ENCODE measurements at regions of chr9 and their contacts with region 1.

Region 1: GRCh38 chr9:136807281-136808074 is at the start of gene RABL6:
- DNase-seq: peak; percentile 76
- H3K4me3 Mint-ChIP-seq: peak within 1 kb of the TSS; percentile 82
- H3K27ac Mint-ChIP-seq: peak within 1 kb of the TSS; percentile 88
- H3K4me1 Mint-ChIP-seq: peaks cover 32% of the 10 kb centered on the region
- H3K27me3 Mint-ChIP-seq: no peaks in the 10 kb centered on the region
- total RNA-seq, gene RABL6: 74.9 to 82.7 TPM

Region 2: GRCh38 chr9:136160381-136160841 is 647.1 kb before region 1 on chr9:
- CTCF ChIA-PET with region 1: no interaction called
- intact Hi-C with region 1: no loop called
- DNase-seq: no peak
- H3K4me3 Mint-ChIP-seq: no peak overlapping the region
- H3K27ac Mint-ChIP-seq: no peak overlapping the region
- H3K4me1 Mint-ChIP-seq: no peaks in the 10 kb centered on the region
- H3K27me3 Mint-ChIP-seq: peaks cover 6% of the 10 kb centered on the region

Region 3: GRCh38 chr9:136849038-136849959 is 41.8 kb after region 1 on chr9 and contains the start of gene PHPT1:
- CTCF ChIA-PET with region 1: no interaction called
- intact Hi-C with region 1: loop called (anchors 2 kb)
- DNase-seq: peak; percentile 99
- H3K4me3 Mint-ChIP-seq: peak within 1 kb of the TSS; percentile 93
- H3K27ac Mint-ChIP-seq: peak within 1 kb of the TSS; percentile 95
- H3K4me1 Mint-ChIP-seq: peaks cover 14% of the 10 kb centered on the region
- H3K27me3 Mint-ChIP-seq: peaks cover 18% of the 10 kb centered on the region
- total RNA-seq, gene PHPT1: 110 to 116 TPM

Region 4: DNA sequence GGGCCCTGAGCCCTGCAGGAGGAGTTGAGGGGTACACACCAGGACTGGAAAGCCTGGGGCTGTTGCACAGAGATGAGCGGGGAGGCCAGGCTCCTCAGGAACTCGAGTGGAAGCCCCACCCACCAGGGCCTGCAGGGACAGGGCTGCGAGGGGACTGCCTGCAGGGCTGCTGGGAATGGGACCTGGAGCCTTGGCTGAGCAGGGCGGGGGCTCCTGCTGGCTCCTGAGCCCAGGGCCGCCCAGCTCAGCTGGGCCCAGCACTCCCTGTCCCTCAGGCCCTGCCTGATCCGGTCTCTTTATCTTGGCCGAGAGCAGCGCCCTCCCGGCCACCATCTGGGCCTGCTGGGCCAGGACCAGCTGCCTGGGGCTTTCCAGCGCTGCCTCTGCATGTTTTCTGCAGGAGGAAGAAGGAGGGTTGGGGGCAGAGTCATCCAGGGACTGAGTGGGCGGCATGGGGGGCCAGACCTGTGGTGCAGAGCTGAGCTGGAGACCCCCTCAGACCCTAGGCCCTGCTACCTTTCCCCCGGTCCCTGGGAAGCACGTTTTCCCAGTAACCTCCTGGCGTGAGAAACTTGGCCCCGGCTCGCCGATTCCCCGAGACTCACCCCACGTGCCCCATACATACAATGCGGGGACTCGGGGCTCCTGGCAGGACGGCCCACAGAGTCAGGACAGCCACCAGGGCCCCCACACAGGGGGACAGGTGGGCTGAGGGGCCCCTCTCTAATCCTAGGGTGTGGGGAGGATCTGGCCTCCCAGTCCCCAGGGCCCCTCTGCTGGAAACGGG is 154.0 kb after region 1 on chr9:
- CTCF ChIA-PET with region 1: no interaction called
- intact Hi-C with region 1: no loop called
- DNase-seq: no peak
- H3K4me3 Mint-ChIP-seq: no peak overlapping the region
- H3K27ac Mint-ChIP-seq: no peak overlapping the region
- H3K4me1 Mint-ChIP-seq: peaks cover 12% of the 10 kb centered on the region
- H3K27me3 Mint-ChIP-seq: no peaks in the 10 kb centered on the region

Region 5: GRCh38 chr9:136991993-136992818 is 184.7 kb after region 1 on chr9 and contains the start of gene PAXX:
- CTCF ChIA-PET with region 1: no interaction called
- intact Hi-C with region 1: loop called (anchors 1 kb)
- DNase-seq: peak; percentile 95
- H3K4me3 Mint-ChIP-seq: peak within 1 kb of the TSS; percentile 83
- H3K27ac Mint-ChIP-seq: peak within 1 kb of the TSS; percentile 81
- H3K4me1 Mint-ChIP-seq: peaks cover 16% of the 10 kb centered on the region
- H3K27me3 Mint-ChIP-seq: peaks cover under 1% of the 10 kb centered on the region
- total RNA-seq, gene PAXX: 75.9 to 76.8 TPM

Region 6: DNA sequence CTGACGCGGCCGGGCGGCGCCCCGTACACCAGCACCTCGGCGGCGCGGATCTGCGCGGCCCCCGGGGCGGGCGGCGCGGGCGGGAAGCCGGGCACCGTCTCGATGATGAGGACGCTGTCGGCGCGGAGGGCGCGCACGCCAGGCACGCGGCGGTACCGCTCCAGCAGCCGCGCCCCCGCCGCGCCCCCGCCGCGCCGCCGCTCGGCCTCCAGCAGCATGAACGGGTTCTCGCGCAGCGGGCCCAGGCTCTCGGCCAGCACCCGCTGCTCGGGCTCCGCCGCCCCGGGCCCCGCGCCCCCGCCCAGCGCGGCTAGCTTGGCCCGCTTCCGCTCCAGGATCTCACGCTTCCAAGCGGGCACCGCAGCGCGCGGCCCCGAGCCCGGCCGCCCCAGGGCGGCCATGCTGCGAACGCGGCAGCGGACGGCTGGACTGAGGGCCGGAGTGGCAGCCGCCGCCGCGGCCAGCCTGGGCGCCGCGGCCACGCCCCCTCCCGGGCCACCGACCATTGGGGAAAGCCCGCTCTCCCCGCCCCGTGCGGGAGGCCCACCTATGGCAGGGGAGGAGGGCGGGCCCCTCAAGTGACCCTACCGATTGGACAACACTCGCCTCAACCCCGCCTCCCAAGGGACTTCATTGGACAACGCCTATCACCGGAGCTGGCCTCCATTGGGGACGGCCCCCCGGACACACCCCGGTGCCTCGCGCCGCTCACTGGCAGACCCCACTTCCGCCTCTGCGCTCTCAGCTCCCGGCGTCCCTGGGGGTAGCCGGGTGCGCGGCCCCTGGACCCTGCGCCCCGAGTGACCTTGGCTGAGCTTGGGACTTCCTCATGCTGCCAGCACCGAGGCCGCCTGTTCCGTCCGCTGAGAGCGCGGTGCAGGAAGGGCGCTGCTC is 393.1 kb after region 1 on chr9 and contains the start of gene TPRN:
- CTCF ChIA-PET with region 1: no interaction called
- intact Hi-C with region 1: loop called (anchors 5 kb)
- DNase-seq: peak; percentile 99
- H3K4me3 Mint-ChIP-seq: peak within 1 kb of the TSS; percentile 80
- H3K27ac Mint-ChIP-seq: peak within 1 kb of the TSS; percentile 56
- H3K4me1 Mint-ChIP-seq: peaks cover 33% of the 10 kb centered on the region
- H3K27me3 Mint-ChIP-seq: no peaks in the 10 kb centered on the region
- total RNA-seq, gene TPRN: 2.1 to 2.6 TPM

Region 7: DNA sequence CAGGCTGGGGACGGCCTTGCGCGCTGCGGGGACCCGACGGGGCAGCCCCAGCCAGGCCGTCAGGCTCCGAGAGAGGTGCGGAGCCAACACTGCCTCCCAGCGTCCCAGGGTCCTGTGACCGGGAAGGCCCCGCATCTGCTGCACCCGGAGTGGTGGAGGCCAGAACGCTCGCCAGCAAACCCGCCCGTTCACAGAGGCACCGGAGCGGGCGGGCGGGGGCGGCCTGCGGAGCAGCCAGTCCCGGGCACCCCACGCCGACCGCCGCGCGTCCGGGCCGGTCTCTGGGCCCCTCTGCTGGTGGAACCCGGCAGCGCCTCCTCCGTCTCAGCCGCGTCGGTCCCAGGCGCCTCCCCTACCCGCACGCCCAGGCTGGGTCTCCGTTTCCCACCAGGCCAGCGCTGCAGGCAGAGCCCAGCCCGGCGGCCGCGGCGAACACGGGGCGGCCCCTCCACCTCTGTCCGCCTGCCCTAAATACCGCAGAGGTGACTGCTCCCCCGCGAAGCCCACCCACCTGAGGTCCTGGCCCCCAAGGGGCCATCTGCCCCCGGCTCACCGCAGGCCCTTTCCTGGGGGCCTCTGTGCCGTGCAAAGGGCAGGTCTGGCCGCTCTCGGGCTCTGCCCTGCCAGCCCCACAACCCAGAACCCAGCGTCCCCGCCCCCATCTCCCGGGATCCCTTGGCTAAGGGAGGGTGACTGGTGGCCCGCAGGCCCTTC is 599.6 kb after region 1 on chr9:
- CTCF ChIA-PET with region 1: no interaction called
- intact Hi-C with region 1: no loop called
- DNase-seq: peak; percentile 72
- H3K4me3 Mint-ChIP-seq: no peak overlapping the region
- H3K27ac Mint-ChIP-seq: no peak overlapping the region
- H3K4me1 Mint-ChIP-seq: peaks cover 6% of the 10 kb centered on the region
- H3K27me3 Mint-ChIP-seq: no peaks in the 10 kb centered on the region

Measured in activated naive CD4-positive, alpha-beta T cell treated with anti-CD3 and anti-CD28 coated beads for 36 hours (primary cell).